Astrocyte of the cerebellum (primary cell): ENCODE measurements at regions of chr9 and their contacts with region 1.

Region 1: DNA sequence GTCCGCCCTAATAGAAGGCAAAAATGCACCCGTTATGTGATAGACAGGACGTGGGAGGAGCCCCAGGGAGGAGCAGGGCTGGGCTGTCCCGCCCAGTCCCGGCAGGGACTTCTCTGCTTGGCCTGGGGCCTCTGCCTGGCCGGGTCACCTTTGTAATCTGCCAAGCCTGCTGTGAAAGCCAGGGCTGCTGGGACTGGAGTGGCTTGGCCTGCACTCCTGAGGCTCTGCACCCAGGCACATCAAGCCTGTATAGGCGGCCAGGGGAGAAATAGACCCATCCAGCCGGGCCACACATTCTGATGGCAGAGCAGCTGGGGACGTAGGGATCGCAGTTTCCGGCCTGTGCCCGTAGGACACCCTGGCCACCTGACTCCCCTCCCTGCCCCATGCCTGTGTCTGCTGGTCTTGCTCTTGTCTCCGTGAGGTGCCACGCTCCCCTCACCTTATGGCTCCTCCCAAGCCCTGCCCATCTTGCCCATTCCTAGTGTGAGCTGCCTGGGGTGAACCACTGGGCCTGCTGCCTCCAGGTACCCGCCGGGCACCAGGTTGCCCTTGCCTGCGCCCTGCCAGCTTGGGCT is 28.1 kb downstream of the DYNC2I2 start:
- DNase-seq: no peak
- H3K4me3 ChIP-seq: no peak overlapping the region
- CTCF ChIP-seq: no peak

Region 2: DNA sequence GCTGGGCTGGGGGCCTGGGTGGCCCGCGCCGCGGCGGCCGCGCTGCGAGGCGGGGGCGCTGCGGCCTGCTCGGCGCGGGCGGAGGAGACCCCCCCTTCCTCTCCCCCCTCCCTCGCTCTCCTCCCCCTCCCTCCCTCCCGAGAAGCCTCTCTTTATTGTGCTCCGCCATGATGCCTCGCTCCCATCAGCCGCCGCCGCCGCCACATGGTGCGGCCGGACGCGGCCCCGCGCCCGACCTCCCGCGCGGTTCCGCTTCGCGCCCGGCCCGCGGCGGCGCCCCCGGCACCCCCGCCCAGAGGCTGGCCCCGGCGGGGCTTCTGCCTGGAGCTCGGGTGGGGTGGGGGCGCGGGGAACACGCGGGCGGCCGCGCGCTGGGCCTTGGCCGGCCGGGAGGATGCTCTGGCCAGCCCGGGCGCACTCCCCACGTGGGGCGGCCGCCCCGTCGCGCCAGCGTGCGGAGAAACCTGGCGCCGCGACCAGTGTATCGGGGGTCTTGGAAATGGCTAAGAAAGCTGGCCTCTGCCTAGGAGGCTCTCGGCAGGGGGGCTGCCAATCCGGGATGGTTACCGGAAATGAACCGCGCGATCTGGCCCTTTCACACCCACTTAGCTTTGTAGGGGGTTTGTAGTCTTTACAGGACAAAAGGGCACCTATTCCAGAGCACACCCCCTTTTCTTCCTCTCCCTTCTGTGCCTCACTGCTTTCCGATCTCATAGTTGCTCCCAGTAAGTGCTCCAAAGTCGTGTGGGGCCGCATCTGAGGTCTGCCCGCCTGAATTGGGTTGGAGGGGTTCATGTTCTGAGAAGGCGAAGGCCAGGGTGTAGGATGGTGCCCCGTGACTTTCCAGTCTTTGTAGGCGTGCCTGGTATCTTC is 61.5 kb after region 1 on chr9:
- in situ Hi-C with region 1: loop called (anchors 10 kb)
- DNase-seq: no peak
- H3K4me3 ChIP-seq: peak overlapping the region; percentile 96
- CTCF ChIP-seq: no peak